Right cardiac atrium (tissue), 5 donors: ENCODE measurements at regions of chr12 and their contacts with region 1.

Region 1: DNA sequence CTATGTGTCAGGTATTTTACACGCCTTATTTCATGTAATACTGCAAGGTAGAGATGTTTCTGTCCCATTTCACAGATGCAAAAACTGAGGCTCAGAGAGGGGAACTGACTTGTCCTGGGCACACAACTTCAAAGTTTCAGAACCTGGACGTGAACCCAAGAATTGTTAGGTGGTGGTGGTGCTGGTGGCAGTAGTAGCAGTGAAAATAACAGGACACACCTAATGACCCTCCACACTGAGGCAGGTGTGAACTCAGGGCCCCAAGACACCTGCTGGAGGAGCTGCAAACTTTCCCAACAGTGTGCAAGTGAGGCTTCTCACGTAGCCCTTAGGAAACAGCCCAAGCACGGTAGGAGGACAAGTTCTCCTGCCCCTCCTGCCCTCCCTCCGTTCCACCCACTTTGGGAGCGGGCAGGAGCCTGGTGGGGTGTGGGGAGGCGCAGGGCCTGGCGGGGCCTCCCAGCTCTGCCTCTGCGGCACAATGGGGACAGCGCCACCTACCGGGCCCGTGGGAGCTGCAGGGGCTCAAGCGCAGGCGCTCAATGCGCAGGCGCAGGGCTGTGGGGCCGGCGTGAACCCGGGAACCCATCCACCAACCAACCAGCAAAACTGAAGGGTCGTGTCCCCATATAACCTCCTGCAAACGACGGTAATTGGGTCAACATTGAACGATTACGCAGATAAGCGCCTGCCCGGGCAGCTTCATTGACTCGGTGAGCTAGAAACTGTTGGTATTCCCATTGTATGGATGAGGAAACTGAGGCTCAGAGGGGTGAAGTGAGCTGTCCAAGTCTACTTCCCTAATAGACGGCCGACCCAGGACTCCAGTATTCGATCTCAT is 12.0 kb upstream of the TRPV4 start:
- DNase-seq: peak; percentile 89 to 96 (median 96)
- ATAC-seq: peak; percentile 93 to 96
- H3K4me3 ChIP-seq: no peak overlapping the region
- H3K27ac ChIP-seq: no peak overlapping the region
- H3K4me1 ChIP-seq: no peaks in the 10 kb centered on the region
- H3K27me3 ChIP-seq: no peaks in the 10 kb centered on the region

Region 2: DNA sequence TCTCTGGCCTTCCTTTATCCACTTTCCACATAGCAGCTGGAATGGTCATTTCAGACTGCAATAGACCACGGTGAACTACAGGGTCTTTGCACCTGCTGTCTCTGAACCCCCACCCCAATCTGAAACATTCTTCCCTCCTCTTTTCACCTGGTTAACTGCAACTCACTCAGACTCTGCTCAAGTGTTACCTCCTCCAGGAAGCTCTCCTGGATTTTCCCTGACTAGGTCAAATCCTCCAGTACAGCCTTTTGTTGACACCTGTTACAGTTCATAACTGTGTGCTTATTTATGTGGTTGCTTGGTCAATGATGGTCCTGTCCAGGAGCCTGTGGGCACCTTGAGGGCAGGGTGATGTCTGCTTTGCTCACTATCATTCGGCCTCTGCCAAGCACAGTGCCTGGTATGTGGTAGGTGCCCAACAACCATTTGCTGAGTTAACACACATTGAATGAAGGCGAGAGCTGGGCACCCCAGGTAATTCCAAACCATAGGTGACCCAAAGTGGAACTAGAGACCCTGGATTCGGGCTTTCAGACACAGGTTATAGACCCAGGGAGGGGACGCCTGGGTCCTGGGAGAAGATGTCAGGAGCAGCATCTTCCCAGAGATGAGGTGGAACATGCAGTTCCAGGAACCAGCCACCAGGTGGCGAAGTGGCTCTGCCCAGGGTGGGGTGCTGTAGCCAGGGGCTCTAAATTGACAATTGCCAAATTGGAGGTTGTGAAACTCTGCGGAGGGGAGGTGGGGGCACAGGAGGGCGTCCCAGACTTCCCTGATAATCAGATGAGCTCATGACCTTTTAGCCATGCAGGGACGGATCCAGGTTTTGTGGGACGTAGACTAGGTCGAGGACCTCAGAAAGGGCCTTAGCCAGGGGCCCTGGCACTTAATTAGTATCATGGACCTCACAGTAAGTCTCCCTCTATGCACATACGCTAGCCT is 40.1 kb before region 1 on chr12:
- intact Hi-C with region 1: loop called in 2 of 4 experiments (anchors 1 to 2 kb)
- DNase-seq: peak; percentile 42 to 88 (median 86)
- ATAC-seq: peak; percentile 73 to 84
- H3K4me3 ChIP-seq: no peak overlapping the region
- H3K27ac ChIP-seq: no peak overlapping the region
- H3K4me1 ChIP-seq: no peaks in the 10 kb centered on the region
- H3K27me3 ChIP-seq: no peaks in the 10 kb centered on the region

Region 3: GRCh38 chr12:109899783-109900751 is 54.9 kb after region 1 on chr12 and contains the start of gene TCHP:
- intact Hi-C with region 1: no loop called
- DNase-seq: peak; percentile 88 to 95 (median 94)
- ATAC-seq: peak; percentile 94 to 96
- H3K4me3 ChIP-seq: peak within 1 kb of the TSS; percentile 80
- H3K27ac ChIP-seq: peak within 1 kb of the TSS; percentile 90
- H3K4me1 ChIP-seq: no peaks in the 10 kb centered on the region
- H3K27me3 ChIP-seq: no peaks in the 10 kb centered on the region
- total RNA-seq, gene TCHP: 7.1 to 13.5 (median 10.3) TPM

Region 4: DNA sequence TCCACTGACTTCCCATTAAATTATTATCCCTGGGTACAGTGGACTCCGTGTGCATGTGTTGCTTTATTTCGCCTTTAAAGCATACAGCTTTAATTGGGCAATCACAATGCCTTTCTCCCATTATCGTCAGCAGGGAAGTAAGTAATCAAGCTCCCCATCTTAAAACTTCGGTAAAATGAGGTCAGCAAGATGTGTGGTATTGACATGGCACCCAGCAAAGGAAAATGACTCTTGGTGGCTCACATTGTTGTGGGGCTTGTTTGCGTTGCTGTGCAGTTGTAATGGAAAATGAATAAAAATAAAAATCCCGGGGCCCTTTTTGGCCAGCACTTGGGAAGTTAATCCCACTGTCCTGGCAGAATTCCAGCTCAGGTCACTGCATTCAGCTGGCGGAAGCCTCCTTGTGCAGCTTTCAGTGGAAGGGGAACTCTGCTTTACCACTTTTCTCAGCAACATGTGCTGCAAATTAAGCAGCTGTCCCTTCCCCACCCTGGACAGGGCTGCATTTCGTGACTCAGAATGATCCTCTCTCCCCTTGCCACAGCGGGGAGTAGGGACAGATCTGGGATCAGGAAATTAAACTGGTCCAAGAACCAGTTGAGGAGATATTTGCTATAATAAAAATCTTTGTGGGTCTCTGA is 421.9 kb after region 1 on chr12:
- intact Hi-C with region 1: no loop called
- DNase-seq: peak; percentile 42 to 62 (median 59)
- ATAC-seq: peak; percentile 45 to 74
- H3K4me3 ChIP-seq: no peak overlapping the region
- H3K27ac ChIP-seq: peak overlapping the region; percentile 70
- H3K4me1 ChIP-seq: peaks cover 5% of the 10 kb centered on the region
- H3K27me3 ChIP-seq: no peaks in the 10 kb centered on the region